Breast epithelium (tissue), 4 donors: ENCODE measurements at regions of chr13 and their contacts with region 1.

Region 1: DNA sequence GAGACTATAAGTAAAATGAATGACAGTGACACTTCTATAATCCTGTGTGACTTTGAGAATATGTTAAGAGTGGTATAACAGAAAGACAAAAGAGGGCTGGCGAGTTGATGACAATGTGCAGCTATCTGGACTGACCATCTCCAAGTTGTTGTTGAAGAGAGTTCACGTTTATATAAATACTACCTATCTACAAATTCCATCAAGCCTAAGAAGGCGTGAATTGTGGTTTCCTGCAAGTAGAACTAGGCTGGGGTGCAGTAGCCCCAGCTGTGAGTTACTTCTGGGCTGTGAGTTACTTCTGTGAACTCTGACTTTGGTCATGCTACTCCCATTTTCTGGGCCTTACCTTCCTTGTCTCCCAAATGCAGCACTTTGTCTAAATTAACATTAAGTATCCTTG is 561.0 kb downstream of the TBC1D4 start:
- DNase-seq: no peak
- H3K4me3 ChIP-seq: no peak overlapping the region
- H3K27ac ChIP-seq: no peak overlapping the region
- H3K4me1 ChIP-seq: no peaks in the 10 kb centered on the region
- H3K27me3 ChIP-seq: no peaks in the 10 kb centered on the region
- CTCF ChIP-seq: no peak
- POLR2A ChIP-seq: no peak

Region 2: GRCh38 chr13:74904556-74904955 is 16.4 kb before region 1 on chr13:
- intact Hi-C with region 1: loop called (anchors 1 kb)
- DNase-seq: no peak
- H3K4me3 ChIP-seq: no peak overlapping the region
- H3K27ac ChIP-seq: no peak overlapping the region
- H3K4me1 ChIP-seq: no peaks in the 10 kb centered on the region
- H3K27me3 ChIP-seq: no peaks in the 10 kb centered on the region
- CTCF ChIP-seq: no peak
- POLR2A ChIP-seq: no peak